ENCODE measurements at regions of chr1 and their contacts with region 1.

Region 1: DNA sequence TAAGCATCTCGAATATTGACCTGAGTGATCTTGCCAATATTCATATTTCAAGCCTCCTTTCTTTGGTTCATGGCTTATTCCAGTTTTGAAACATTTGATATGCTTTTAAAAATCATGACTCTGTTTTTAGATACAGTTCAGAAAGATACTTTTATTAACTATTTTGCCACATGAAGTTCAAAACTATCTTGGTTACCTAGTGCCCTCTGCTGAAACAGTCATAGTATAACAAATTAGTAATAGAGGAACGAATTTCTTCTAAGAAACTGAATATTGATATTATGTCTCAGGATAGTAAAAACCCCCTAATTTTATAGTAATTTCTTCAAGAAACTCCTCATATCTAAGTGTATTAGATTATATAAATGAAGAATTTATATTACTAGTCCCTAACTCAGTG is 52.6 kb upstream of the RC3H1 start:
- DNase-seq: no peak
- ATAC-seq: no peak
- H3K4me3 ChIP-seq: no peak overlapping the region
- H3K27ac ChIP-seq: no peak overlapping the region
- H3K4me1 ChIP-seq: 0 out of 2 replicates have a peak, but pooled peaks cover 14% of the 10 kb centered on the region
- H3K27me3 ChIP-seq: no peaks in the 10 kb centered on the region
- CTCF ChIP-seq: peak; percentile 37; the same call in 1 of the 2 replicates
- EP300 ChIP-seq: no peak
- POLR2A ChIP-seq: no peak
- RAD21 ChIP-seq: no peak

Region 2: DNA sequence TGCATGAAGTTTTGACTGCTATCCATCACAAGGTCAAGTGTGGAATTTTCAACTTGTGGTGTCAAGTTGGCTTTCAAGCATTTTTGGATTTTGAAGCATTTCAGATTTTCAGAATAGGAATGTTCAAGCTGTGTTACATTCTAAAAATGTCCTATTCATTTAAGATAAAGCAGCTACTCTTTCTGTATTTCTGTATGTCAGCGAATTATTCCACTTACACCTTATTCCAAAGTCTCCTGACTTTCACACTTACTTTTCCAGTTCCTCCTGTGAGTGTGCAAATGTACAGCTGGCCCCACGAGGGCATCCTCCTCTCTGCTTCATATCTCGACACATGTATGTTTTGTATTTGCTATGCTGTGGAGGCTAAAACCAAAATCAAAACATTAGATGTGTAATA is 104.5 kb before region 1 on chr1:
- CTCF ChIA-PET with region 1: no interaction called
- POLR2A ChIA-PET with region 1: no interaction called
- in situ Hi-C with region 1: no loop called
- intact Hi-C with region 1: loop called (anchors 10 kb)
- DNase-seq: no peak
- ATAC-seq: no peak
- H3K4me3 ChIP-seq: no peak overlapping the region
- H3K27ac ChIP-seq: no peak overlapping the region
- H3K4me1 ChIP-seq: no peaks in the 10 kb centered on the region
- H3K27me3 ChIP-seq: no peaks in the 10 kb centered on the region
- CTCF ChIP-seq: no peak
- EP300 ChIP-seq: no peak
- POLR2A ChIP-seq: no peak
- RAD21 ChIP-seq: no peak

Region 3: GRCh38 chr1:174022080-174022975 is 52.4 kb before region 1 on chr1 and contains the start of gene RC3H1:
- CTCF ChIA-PET with region 1: no interaction called
- POLR2A ChIA-PET with region 1: no interaction called
- in situ Hi-C with region 1: no loop called
- intact Hi-C with region 1: loop called (anchors 2 kb)
- DNase-seq: peak; percentile 80
- ATAC-seq: peak; percentile 91
- H3K4me3 ChIP-seq: peak within 1 kb of the TSS; percentile 75 to 97 (median 93)
- H3K27ac ChIP-seq: peak within 1 kb of the TSS; percentile 84
- H3K4me1 ChIP-seq: peaks cover 43% of the 10 kb centered on the region
- H3K27me3 ChIP-seq: no peaks in the 10 kb centered on the region; a peak in 1 of 5 replicates
- CTCF ChIP-seq: no peak
- EP300 ChIP-seq: 0 out of 4 replicates have a peak, but pooled peaks of 1 of the 2 experiments have one; percentile 32
- POLR2A ChIP-seq: peak; percentile 85 to 97
- RAD21 ChIP-seq: no peak
- total RNA-seq, gene RC3H1: 19.6 and 24.4 TPM in 2 replicates

Measured in HepG2 (cell line).